Activated B cell treated with CpG ODN at 0.5 μM for 24 hours (primary cell): ENCODE measurements at regions of chr7 and their contacts with region 1.

Region 1: GRCh38 chr7:18570890-18571478 is 75.4 kb downstream of the HDAC9 start:
- DNase-seq: no peak
- ATAC-seq: no peak
- H3K4me3 Mint-ChIP-seq: no peak overlapping the region
- H3K27ac Mint-ChIP-seq: peak overlapping the region; percentile 50
- H3K4me1 Mint-ChIP-seq: peaks cover 71% of the 10 kb centered on the region
- H3K27me3 Mint-ChIP-seq: no peaks in the 10 kb centered on the region
- CTCF ChIP-seq: no peak

Region 2: GRCh38 chr7:18212758-18213157 is 358.2 kb before region 1 on chr7:
- CTCF ChIA-PET with region 1: no interaction called
- POLR2A ChIA-PET with region 1: no interaction called
- intact Hi-C with region 1: no loop called
- DNase-seq: no peak
- ATAC-seq: no peak
- H3K4me3 Mint-ChIP-seq: no peak overlapping the region
- H3K27ac Mint-ChIP-seq: no peak overlapping the region
- H3K4me1 Mint-ChIP-seq: peaks cover 8% of the 10 kb centered on the region
- H3K27me3 Mint-ChIP-seq: no peaks in the 10 kb centered on the region
- CTCF ChIP-seq: no peak

Region 3: GRCh38 chr7:18313965-18314364 is 257.0 kb before region 1 on chr7:
- CTCF ChIA-PET with region 1: no interaction called
- POLR2A ChIA-PET with region 1: no interaction called
- intact Hi-C with region 1: no loop called
- DNase-seq: no peak
- ATAC-seq: no peak
- H3K4me3 Mint-ChIP-seq: no peak overlapping the region
- H3K27ac Mint-ChIP-seq: no peak overlapping the region
- H3K4me1 Mint-ChIP-seq: peaks cover 51% of the 10 kb centered on the region
- H3K27me3 Mint-ChIP-seq: no peaks in the 10 kb centered on the region
- CTCF ChIP-seq: no peak

Region 4: DNA sequence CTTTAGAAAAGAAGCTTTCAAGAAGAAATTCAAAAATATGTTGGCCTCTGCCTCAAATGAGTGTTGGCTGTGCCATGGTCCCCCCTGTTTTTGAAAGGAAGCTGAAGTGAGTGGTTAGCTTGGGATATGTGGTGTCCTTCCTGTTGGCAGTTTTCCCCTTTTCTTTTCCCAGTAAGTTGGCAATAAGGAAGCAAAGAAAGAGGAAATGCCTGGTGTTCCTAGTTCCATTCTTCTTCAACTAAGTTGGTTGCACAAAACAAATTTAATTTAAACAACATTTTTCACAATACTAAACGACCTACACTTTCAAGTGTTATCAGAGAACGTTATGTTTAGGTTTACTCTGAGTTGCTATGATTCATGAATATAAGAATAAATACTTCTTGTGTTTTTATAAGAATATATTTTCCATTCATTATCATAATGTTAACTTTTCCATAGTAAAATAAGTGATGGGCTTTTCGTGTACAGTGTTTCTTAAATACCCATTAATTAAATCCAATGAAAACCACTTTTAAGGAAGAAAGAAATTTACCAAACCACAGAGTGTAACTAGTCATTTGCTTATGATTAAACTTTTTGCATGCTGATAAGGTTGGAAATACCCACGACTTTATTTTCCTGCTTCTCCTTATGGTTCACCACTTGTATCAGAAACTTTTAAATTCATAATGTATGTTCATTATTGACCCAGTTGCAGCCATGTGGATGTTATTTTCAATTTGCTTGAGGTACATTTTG is 67.7 kb before region 1 on chr7:
- CTCF ChIA-PET with region 1: interaction called, 32 read pairs
- POLR2A ChIA-PET with region 1: interaction called, 30 read pairs
- intact Hi-C with region 1: no loop called
- DNase-seq: no peak
- ATAC-seq: peak; percentile 35
- H3K4me3 Mint-ChIP-seq: peak overlapping the region; percentile 67
- H3K27ac Mint-ChIP-seq: peak overlapping the region; percentile 91
- H3K4me1 Mint-ChIP-seq: peaks cover 87% of the 10 kb centered on the region
- H3K27me3 Mint-ChIP-seq: no peaks in the 10 kb centered on the region
- CTCF ChIP-seq: no peak

Region 5: GRCh38 chr7:18520450-18521235 is 50.3 kb before region 1 on chr7:
- CTCF ChIA-PET with region 1: interaction called, 3 read pairs
- POLR2A ChIA-PET with region 1: interaction called, 8 read pairs
- intact Hi-C with region 1: loop called (anchors 1 kb)
- DNase-seq: no peak
- ATAC-seq: peak; percentile 86
- H3K4me3 Mint-ChIP-seq: peak overlapping the region; percentile 78
- H3K27ac Mint-ChIP-seq: peak overlapping the region; percentile 97
- H3K4me1 Mint-ChIP-seq: peaks cover 82% of the 10 kb centered on the region
- H3K27me3 Mint-ChIP-seq: no peaks in the 10 kb centered on the region
- CTCF ChIP-seq: no peak

Region 6: GRCh38 chr7:18541181-18541870 is 29.7 kb before region 1 on chr7:
- CTCF ChIA-PET with region 1: interaction called, 3 read pairs
- POLR2A ChIA-PET with region 1: interaction called, 5 read pairs
- intact Hi-C with region 1: loop called (anchors 2 kb)
- DNase-seq: no peak
- ATAC-seq: no peak
- H3K4me3 Mint-ChIP-seq: no peak overlapping the region
- H3K27ac Mint-ChIP-seq: peak overlapping the region; percentile 16
- H3K4me1 Mint-ChIP-seq: peaks cover 64% of the 10 kb centered on the region
- H3K27me3 Mint-ChIP-seq: no peaks in the 10 kb centered on the region
- CTCF ChIP-seq: no peak

Region 7: GRCh38 chr7:18583305-18583704 is 12.3 kb after region 1 on chr7:
- CTCF ChIA-PET with region 1: interaction called, 5 read pairs
- POLR2A ChIA-PET with region 1: interaction called, 4 read pairs
- intact Hi-C with region 1: loop called (anchors 1 kb)
- DNase-seq: no peak
- ATAC-seq: no peak
- H3K4me3 Mint-ChIP-seq: no peak overlapping the region
- H3K27ac Mint-ChIP-seq: peak overlapping the region; percentile 50
- H3K4me1 Mint-ChIP-seq: peaks cover 14% of the 10 kb centered on the region
- H3K27me3 Mint-ChIP-seq: no peaks in the 10 kb centered on the region
- CTCF ChIP-seq: no peak